ENCODE measurements at regions of chr5 and their contacts with region 1.

Region 1: DNA sequence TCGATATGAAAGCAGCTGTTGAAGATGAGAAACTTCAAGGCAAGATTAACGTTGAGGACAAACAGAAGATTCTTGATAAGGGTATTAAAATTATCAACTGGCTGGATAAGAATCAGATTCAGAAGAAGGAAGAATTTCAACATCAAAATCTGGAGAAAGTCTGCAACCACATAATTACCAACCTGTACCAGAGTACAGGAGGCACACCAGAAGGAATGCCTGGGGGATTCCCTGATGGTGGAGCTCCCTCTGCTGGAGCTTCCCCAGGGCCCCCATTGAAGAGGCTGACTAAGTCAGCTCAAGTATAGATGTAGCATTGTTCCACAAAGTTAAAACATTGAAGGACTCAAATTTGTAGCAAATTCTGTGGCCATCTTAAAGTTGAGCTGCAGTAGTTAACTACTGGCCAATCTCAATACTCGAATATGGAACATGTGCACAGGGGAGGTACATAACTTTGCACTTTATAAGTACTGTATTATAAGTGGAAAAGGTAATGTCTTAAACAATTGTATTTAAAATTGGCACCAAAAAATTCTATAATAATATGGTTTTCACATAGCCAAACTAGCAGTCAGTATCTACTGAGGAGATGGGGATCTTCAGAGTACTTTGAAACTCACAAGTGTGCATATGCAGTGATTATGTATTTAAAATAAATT is 237.5 kb downstream of the CHSY3 start:
- DNase-seq: peak; percentile 6 to 15
- ATAC-seq: peak in 1 of 8 donors; percentile 69
- H3K4me3 ChIP-seq: no peak overlapping the region
- H3K27ac ChIP-seq: no peak overlapping the region
- H3K4me1 ChIP-seq: peaks cover 0 to 6% (median 0%) of the 10 kb centered on the region in 9 donors
- H3K27me3 ChIP-seq: no peaks in the 10 kb centered on the region
- CTCF ChIP-seq: peak in 8 of 9 donors; percentile 11 to 73 (median 56)

Region 2: DNA sequence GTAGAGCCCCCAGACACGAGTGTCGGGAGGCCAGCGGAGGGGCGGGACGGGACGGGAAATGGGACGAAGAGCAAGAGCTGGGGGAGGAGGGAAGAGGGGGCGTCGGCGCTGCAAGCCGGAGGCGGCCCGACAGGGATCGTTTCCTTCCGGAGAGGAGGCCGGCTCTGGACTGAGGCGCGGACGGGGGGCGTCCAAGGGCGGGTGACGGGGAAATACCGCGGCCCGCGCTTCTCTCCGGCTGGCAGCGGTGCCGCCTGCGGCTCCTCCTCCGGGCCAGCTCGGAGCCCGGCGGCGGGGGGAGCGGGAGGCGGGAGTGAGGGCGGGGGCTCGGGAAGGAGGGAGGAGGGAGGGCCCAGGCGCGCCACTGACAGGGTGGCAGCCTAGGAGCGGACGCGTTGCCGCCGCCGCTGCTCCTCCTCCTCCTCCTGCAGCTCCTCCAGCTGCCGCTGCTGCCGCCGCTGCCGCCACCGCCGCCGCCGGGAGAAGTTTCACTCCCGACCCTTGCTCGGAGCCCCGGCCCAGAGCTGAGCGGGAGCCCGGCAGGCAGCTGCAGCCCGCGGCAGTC is 237.6 kb before region 1 on chr5 and contains the start of gene CHSY3:
- intact Hi-C with region 1: loop called in 5 of 10 experiments (anchors 2 to 10 kb)
- DNase-seq: peak; percentile 76 to 86
- ATAC-seq: peak; percentile 91 to 98 (median 92)
- H3K4me3 ChIP-seq: peak within 1 kb of the TSS; percentile 51 to 89 (median 74)
- H3K27ac ChIP-seq: peak within 1 kb of the TSS; percentile 41 to 84 (median 73)
- H3K4me1 ChIP-seq: peaks cover 0 to 27% (median 19%) of the 10 kb centered on the region in 9 donors
- H3K27me3 ChIP-seq: peaks cover 0 to 63% (median 0%) of the 10 kb centered on the region in 7 donors
- CTCF ChIP-seq: peak in 3 of 9 donors; percentile 22 to 41 (median 29)
- total RNA-seq, gene CHSY3: 0.47 to 1.6 (median 1.1) TPM

Region 3: GRCh38 chr5:130109152-130109551 is 32.6 kb before region 1 on chr5:
- intact Hi-C with region 1: no loop called
- DNase-seq: no peak
- ATAC-seq: no peak
- H3K4me3 ChIP-seq: no peak overlapping the region
- H3K27ac ChIP-seq: no peak overlapping the region
- H3K4me1 ChIP-seq: no peaks in the 10 kb centered on the region
- H3K27me3 ChIP-seq: no peaks in the 10 kb centered on the region
- CTCF ChIP-seq: peak in 7 of 9 donors; percentile 34 to 65 (median 54)